Activated CD4-positive, alpha-beta memory T cell treated with anti-CD3 and anti-CD28 coated beads, Interleukin-2, amount 10 ng/mL, durations not matched to agents 7 days and 5 days (primary cell): ENCODE measurements at regions of chr10 and their contacts with region 1.

Region 1: GRCh38 chr10:13299437-13300287 is at the start of gene PHYH:
- DNase-seq: peak; percentile 83
- H3K4me3 Mint-ChIP-seq: peak within 1 kb of the TSS; percentile 80
- H3K27ac Mint-ChIP-seq: peak within 1 kb of the TSS; percentile 87
- H3K4me1 Mint-ChIP-seq: peaks cover 26% of the 10 kb centered on the region
- H3K27me3 Mint-ChIP-seq: no peaks in the 10 kb centered on the region
- total RNA-seq, gene PHYH: 10.9 to 11.2 TPM

Region 2: DNA sequence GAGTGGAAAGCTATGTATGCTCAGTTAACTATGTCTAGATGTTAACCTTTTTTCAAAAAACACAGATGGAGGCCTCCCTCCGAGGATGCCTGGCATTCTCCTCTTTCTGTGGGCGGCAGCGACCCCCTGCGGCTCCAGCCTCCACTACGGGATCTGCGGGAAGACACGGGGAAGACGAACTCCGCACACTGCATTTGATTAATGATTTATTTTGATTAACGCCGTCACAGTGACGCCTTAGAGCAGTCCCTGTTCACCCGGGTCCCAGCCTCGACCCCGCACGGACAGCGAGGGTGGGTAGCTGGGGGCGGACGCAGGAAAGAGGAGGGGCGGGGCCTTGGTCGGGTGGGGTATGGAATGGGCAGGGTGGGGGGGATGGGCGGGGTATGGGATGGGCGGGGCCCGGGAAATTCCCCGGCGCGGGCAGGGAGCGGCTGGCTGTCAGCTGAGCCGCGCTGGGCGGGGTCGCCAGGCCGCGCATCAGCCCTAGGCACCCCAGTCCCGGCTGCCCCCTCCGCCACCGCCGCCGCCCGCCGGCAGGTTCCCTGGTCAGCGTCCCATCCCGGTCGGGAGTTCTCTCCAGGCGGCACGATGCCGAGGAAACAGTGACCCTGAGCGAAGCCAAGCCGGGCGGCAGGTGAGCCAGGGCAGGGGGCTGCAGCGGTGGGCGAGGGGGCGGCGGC is 199.9 kb before region 1 on chr10 and contains the start of gene OPTN:
- CTCF ChIA-PET with region 1: interaction called, 11 read pairs
- POLR2A ChIA-PET with region 1: interaction called, 23 read pairs
- DNase-seq: peak; percentile 83
- H3K4me3 Mint-ChIP-seq: peak within 1 kb of the TSS; percentile 92
- H3K27ac Mint-ChIP-seq: peak within 1 kb of the TSS; percentile 91
- H3K4me1 Mint-ChIP-seq: peaks cover 48% of the 10 kb centered on the region
- H3K27me3 Mint-ChIP-seq: no peaks in the 10 kb centered on the region
- total RNA-seq, gene OPTN: 196 to 197 TPM

Region 3: DNA sequence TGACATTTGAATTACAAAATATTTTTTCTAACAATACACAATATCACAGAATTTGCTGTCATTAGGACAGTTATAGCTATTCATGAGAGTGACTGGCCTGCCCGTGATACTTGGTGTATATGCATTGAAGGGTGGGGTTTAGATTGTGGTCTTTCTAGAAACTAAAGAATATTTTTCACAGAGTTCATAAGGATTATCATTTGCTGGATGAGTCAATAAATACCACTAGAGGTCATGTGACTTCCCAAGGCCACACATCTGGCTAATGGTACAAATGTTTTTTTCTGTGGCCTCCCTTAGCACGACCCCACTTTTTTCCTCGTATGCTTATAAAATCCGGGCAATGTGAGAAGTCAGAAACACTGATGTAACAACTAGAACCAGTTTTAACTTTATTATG is 194.5 kb before region 1 on chr10:
- CTCF ChIA-PET with region 1: interaction called, 11 read pairs
- POLR2A ChIA-PET with region 1: interaction called, 23 read pairs
- DNase-seq: no peak
- H3K4me3 Mint-ChIP-seq: peak overlapping the region; percentile 25
- H3K27ac Mint-ChIP-seq: peak overlapping the region; percentile 97
- H3K4me1 Mint-ChIP-seq: peaks cover 81% of the 10 kb centered on the region
- H3K27me3 Mint-ChIP-seq: no peaks in the 10 kb centered on the region

Region 4: GRCh38 chr10:13160934-13161856 is 138.5 kb before region 1 on chr10 and contains the start of gene MCM10:
- CTCF ChIA-PET with region 1: interaction called, 46 read pairs
- POLR2A ChIA-PET with region 1: interaction called, 24 read pairs
- DNase-seq: peak; percentile 98
- H3K4me3 Mint-ChIP-seq: peak within 1 kb of the TSS; percentile 88
- H3K27ac Mint-ChIP-seq: peak within 1 kb of the TSS; percentile 66
- H3K4me1 Mint-ChIP-seq: peaks cover 48% of the 10 kb centered on the region
- H3K27me3 Mint-ChIP-seq: no peaks in the 10 kb centered on the region
- total RNA-seq, gene MCM10: 40.7 to 42.9 TPM

Region 5: GRCh38 chr10:13206546-13207443 is 92.9 kb before region 1 on chr10:
- CTCF ChIA-PET with region 1: interaction called, 19 read pairs
- POLR2A ChIA-PET with region 1: interaction called, 11 read pairs
- DNase-seq: no peak
- H3K4me3 Mint-ChIP-seq: no peak overlapping the region
- H3K27ac Mint-ChIP-seq: no peak overlapping the region
- H3K4me1 Mint-ChIP-seq: no peaks in the 10 kb centered on the region
- H3K27me3 Mint-ChIP-seq: no peaks in the 10 kb centered on the region

Region 6: DNA sequence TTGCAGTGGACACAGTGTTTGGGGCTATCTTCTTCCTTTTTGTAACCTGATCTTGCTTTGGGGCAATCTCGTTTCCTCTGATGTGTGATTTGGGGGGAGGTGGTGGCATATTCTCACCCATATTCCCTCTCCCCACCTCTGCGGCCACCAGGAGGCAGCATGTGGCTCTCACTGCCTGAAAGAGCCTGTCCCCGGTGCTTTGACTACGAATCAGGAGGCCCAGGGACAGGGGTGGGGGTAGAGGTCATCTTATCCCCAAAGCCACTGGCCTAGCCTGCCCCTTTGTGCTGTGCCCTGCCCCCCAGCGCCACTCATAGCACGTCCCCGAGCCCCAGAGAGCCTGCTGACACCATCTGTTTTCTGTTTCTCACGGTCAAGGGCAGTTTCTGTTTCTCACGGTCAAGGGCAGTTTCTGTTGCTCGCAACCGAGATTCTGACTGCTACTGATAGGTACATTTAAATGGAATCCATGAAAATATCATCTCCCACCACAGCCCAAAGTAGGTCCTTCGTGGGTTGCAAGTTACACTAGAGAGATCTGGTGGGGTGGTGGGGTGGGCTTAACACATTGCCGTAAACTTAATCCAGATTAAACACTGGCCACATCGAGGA is 28.0 kb before region 1 on chr10:
- CTCF ChIA-PET with region 1: interaction called, 13 read pairs
- POLR2A ChIA-PET with region 1: interaction called, 10 read pairs
- DNase-seq: peak; percentile 65
- H3K4me3 Mint-ChIP-seq: no peak overlapping the region
- H3K27ac Mint-ChIP-seq: no peak overlapping the region
- H3K4me1 Mint-ChIP-seq: peaks cover 6% of the 10 kb centered on the region
- H3K27me3 Mint-ChIP-seq: no peaks in the 10 kb centered on the region

Region 7: GRCh38 chr10:13348216-13349017 is 48.8 kb after region 1 on chr10 and contains the start of gene SEPHS1:
- CTCF ChIA-PET with region 1: interaction called, 11 read pairs
- POLR2A ChIA-PET with region 1: interaction called, 45 read pairs
- DNase-seq: peak; percentile 86
- H3K4me3 Mint-ChIP-seq: peak within 1 kb of the TSS; percentile 91
- H3K27ac Mint-ChIP-seq: peak within 1 kb of the TSS; percentile 95
- H3K4me1 Mint-ChIP-seq: peaks cover 64% of the 10 kb centered on the region
- H3K27me3 Mint-ChIP-seq: peaks cover 10% of the 10 kb centered on the region
- total RNA-seq, gene SEPHS1: 50.9 to 53.6 TPM